ENCODE measurements at regions of chr1 and their contacts with region 1.

Region 1: GRCh38 chr1:70790237-70790923 is 257.2 kb downstream of the PTGER3 start:
- DNase-seq: no peak
- H3K4me3 ChIP-seq: no peak overlapping the region
- CTCF ChIP-seq: no peak
- POLR2A ChIP-seq: no peak

Region 2: GRCh38 chr1:70573317-70573843 is 217.0 kb before region 1 on chr1:
- intact Hi-C with region 1: no loop called
- DNase-seq: no peak
- H3K4me3 ChIP-seq: no peak overlapping the region
- CTCF ChIP-seq: no peak
- POLR2A ChIP-seq: no peak

Region 3: DNA sequence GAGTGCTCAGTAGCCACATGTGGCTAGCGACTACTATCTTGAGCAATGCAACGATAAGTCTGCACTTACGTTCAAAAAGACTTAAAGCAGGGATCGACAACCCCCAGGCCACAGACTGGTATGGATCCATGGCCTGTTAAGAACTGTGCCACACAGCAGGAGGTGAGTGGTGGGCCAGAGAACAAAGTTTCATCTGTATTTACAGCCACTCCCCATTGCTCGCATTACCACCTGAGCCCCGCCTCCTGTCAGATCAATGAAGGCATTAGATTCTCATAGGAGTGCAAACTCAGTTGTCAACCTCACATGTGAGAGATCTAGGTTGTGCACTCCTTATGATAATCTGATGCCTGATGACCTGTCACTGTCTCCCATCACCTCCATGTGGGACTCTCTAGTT is 394.0 kb after region 1 on chr1:
- intact Hi-C with region 1: no loop called
- DNase-seq: no peak
- H3K4me3 ChIP-seq: no peak overlapping the region
- CTCF ChIP-seq: no peak
- POLR2A ChIP-seq: no peak

Region 4: GRCh38 chr1:71770121-71770520 is 979.7 kb after region 1 on chr1:
- intact Hi-C with region 1: loop called (anchors 5 kb)
- DNase-seq: no peak
- H3K4me3 ChIP-seq: no peak overlapping the region
- CTCF ChIP-seq: no peak
- POLR2A ChIP-seq: no peak

Measured in lower leg skin (tissue), 4 donors.